Activated naive CD4-positive, alpha-beta T cell treated with anti-CD3 and anti-CD28 coated beads for 36 hours (primary cell): ENCODE measurements at regions of chr5 and their contacts with region 1.

Region 1: DNA sequence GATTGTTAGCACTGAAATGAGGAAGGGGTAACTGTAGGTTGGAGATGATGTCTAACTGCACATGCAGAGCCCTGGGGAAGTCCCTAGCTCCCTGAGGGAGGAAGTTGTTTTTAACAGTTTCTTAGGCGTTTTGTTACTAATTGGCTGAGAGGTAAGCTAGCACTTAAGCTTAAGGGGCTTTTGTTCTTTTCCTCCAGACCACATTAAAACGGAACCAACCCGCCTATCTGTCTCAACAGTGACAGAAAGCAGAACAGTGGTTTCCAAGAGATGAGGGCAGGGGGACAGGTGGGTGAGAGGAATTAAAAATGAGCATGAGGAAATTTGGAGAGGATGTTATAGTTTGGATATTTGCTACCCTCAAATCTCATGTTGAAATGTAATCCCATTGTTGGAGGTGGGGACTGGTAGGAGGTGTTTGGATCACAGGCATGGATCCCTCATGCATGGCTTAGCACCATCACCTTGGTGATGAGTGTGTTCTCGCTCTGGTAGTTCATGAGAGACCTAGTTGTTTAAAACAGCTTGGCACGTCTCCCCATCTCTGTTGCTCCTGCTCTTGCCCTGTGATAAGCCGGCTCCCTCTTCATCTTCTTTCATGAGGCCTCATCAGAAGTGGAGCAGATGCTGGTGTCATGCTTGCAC is 38.9 kb downstream of the LYRM7 start:
- DNase-seq: peak; percentile 77
- H3K4me3 Mint-ChIP-seq: peak overlapping the region; percentile 69
- H3K27ac Mint-ChIP-seq: peak overlapping the region; percentile 96
- H3K4me1 Mint-ChIP-seq: peaks cover 57% of the 10 kb centered on the region
- H3K27me3 Mint-ChIP-seq: no peaks in the 10 kb centered on the region

Region 2: GRCh38 chr5:131068893-131069643 is 140.6 kb before region 1 on chr5:
- CTCF ChIA-PET with region 1: no interaction called
- intact Hi-C with region 1: loop called (anchors 5 kb)
- DNase-seq: peak; percentile 87
- H3K4me3 Mint-ChIP-seq: no peak overlapping the region
- H3K27ac Mint-ChIP-seq: peak overlapping the region; percentile 94
- H3K4me1 Mint-ChIP-seq: peaks cover 55% of the 10 kb centered on the region
- H3K27me3 Mint-ChIP-seq: no peaks in the 10 kb centered on the region

Region 3: GRCh38 chr5:131170540-131171275 is 38.9 kb before region 1 on chr5 and contains the start of gene LYRM7:
- CTCF ChIA-PET with region 1: no interaction called
- intact Hi-C with region 1: loop called (anchors 1 kb)
- DNase-seq: peak; percentile 98
- H3K4me3 Mint-ChIP-seq: peak within 1 kb of the TSS; percentile 99
- H3K27ac Mint-ChIP-seq: peak within 1 kb of the TSS; percentile 92
- H3K4me1 Mint-ChIP-seq: peaks cover 44% of the 10 kb centered on the region
- H3K27me3 Mint-ChIP-seq: no peaks in the 10 kb centered on the region
- total RNA-seq, gene LYRM7: 14.6 to 15.0 TPM

Region 4: GRCh38 chr5:131242728-131243255 is 33.2 kb after region 1 on chr5:
- CTCF ChIA-PET with region 1: interaction called, 4 read pairs
- intact Hi-C with region 1: loop called (anchors 1 kb)
- DNase-seq: peak; percentile 38
- H3K4me3 Mint-ChIP-seq: no peak overlapping the region
- H3K27ac Mint-ChIP-seq: no peak overlapping the region
- H3K4me1 Mint-ChIP-seq: peaks cover 16% of the 10 kb centered on the region
- H3K27me3 Mint-ChIP-seq: no peaks in the 10 kb centered on the region

Region 5: DNA sequence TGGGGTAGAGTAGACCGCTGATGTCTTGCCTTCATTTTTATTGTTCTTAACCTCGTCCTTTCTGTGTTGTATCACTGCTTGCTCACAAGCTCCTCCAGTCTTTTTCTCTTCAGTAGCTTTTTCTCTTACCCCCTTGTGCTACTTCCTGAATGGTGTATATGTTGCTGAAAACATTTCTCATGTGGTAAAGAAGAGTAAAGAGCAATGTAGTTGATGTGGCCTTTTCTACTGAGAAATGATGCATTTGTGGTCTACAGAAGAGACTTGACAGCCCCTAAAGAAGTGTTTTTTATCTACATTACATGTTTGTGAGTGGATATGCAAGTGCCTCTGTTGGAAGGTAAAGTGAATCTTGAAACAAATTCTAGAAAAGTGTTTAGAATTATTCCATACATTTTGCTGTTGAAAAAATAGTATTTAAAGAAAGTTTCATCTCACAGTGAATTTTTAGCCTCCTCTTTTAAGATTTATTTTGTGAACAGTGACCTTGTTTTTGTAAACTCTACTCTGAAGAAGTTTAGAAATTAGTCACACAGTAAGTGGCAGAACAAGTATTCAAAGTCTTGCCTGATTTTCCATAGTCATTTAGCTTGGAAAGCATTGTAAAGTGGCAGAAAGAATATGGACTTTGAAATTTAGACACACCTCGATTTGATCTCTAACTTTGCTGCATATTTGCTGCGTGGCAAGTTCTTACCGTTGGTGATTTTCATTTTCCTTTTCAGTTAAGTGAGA is 71.7 kb after region 1 on chr5:
- CTCF ChIA-PET with region 1: no interaction called
- intact Hi-C with region 1: loop called (anchors 1 kb)
- DNase-seq: no peak
- H3K4me3 Mint-ChIP-seq: peak overlapping the region; percentile 66
- H3K27ac Mint-ChIP-seq: peak overlapping the region; percentile 93
- H3K4me1 Mint-ChIP-seq: peaks cover 92% of the 10 kb centered on the region
- H3K27me3 Mint-ChIP-seq: no peaks in the 10 kb centered on the region

Region 6: GRCh38 chr5:131394128-131394527 is 184.5 kb after region 1 on chr5:
- CTCF ChIA-PET with region 1: no interaction called
- intact Hi-C with region 1: loop called (anchors 1 kb)
- DNase-seq: peak; percentile 72
- H3K4me3 Mint-ChIP-seq: peak overlapping the region; percentile 67
- H3K27ac Mint-ChIP-seq: peak overlapping the region; percentile 96
- H3K4me1 Mint-ChIP-seq: peaks cover 93% of the 10 kb centered on the region
- H3K27me3 Mint-ChIP-seq: no peaks in the 10 kb centered on the region

Region 7: GRCh38 chr5:131436081-131436480 is 226.5 kb after region 1 on chr5:
- CTCF ChIA-PET with region 1: no interaction called
- intact Hi-C with region 1: no loop called
- DNase-seq: no peak
- H3K4me3 Mint-ChIP-seq: no peak overlapping the region
- H3K27ac Mint-ChIP-seq: no peak overlapping the region
- H3K4me1 Mint-ChIP-seq: no peaks in the 10 kb centered on the region
- H3K27me3 Mint-ChIP-seq: no peaks in the 10 kb centered on the region